ENCODE measurements at regions of chr1 and their contacts with region 1.

Region 1: GRCh38 chr1:182084487-182085316 is 23.2 kb upstream of the ZNF648 start:
- DNase-seq: peak; percentile 93
- H3K4me3 ChIP-seq: no peak overlapping the region
- H3K27ac ChIP-seq: peak overlapping the region in 3 of 4 donors; percentile 56 to 61 (median 60)
- H3K4me1 ChIP-seq: peaks cover 0 to 10% (median 7%) of the 10 kb centered on the region in 4 donors
- H3K27me3 ChIP-seq: no peaks in the 10 kb centered on the region
- CTCF ChIP-seq: peak; percentile 82 to 94 (median 91)
- EP300 ChIP-seq: no peak
- POLR2A ChIP-seq: no peak

Region 2: DNA sequence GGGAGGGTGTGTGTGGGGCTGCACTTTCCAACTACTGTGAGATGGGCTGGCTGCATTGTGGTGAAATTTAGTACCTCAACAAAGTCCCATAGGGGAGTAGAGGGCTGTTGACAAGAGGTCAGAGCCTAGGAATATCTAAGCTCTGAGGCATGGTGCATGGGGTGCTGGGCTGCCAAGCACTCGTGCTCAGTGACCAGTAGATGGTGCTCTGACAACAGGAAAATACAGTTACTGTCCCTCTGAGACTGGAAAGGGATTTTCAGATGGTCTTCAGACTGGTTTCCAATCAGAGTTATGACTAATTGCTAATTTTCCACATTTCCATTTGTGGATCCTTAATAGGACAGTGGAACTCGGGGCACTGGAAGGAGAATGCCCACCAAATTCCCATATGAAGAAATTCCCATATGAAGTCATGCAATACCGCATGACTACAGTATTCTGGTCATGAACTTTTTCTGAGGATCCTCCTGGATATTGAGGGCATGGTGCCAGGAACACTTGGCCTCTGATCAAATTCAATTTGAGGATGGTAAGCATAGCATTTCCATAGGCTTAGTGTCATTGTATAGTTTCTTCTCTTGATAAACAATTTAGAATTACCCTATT is 605.5 kb before region 1 on chr1:
- in situ Hi-C with region 1: loop called in 1 of 4 experiments (anchors 10 kb)
- intact Hi-C with region 1: no loop called
- DNase-seq: peak; percentile 26
- H3K4me3 ChIP-seq: no peak overlapping the region
- H3K27ac ChIP-seq: no peak overlapping the region
- H3K4me1 ChIP-seq: peaks cover 0 to 14% (median 7%) of the 10 kb centered on the region in 4 donors
- H3K27me3 ChIP-seq: peaks cover 39% of the 10 kb centered on the region
- CTCF ChIP-seq: peak; percentile 65 to 76 (median 72)
- EP300 ChIP-seq: no peak
- POLR2A ChIP-seq: no peak

Region 3: DNA sequence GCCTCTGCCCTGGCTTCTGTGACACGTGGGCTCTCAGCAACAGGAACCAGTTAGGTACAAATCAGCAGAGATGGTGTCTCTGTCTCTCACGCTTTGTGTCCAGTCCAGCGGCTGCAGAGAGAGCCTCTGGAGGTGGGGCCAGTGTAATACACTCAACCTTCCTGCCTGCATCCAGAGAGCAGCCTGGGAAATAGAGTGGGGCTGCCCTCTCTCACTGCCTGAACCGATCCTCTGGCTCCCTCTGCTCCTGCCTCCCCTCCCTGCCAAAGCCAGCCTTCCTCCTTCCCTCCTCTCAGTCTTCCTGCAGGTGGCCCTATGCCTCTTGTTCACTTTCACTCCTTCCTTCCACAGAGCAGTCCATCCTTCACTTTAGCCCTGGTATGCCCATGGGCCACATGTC is 23.1 kb before region 1 on chr1 and contains the start of gene ZNF648:
- in situ Hi-C with region 1: no loop called
- intact Hi-C with region 1: no loop called
- DNase-seq: no peak
- H3K4me3 ChIP-seq: no peak within 1 kb of the TSS
- H3K27ac ChIP-seq: no peak within 1 kb of the TSS
- H3K4me1 ChIP-seq: no peaks in the 10 kb centered on the region
- H3K27me3 ChIP-seq: peaks cover 21% of the 10 kb centered on the region
- CTCF ChIP-seq: no peak
- EP300 ChIP-seq: no peak
- POLR2A ChIP-seq: no peak
- total RNA-seq, gene ZNF648: 0.14 to 0.48 TPM in 2 of 4 donors, not detected in the others

Region 4: DNA sequence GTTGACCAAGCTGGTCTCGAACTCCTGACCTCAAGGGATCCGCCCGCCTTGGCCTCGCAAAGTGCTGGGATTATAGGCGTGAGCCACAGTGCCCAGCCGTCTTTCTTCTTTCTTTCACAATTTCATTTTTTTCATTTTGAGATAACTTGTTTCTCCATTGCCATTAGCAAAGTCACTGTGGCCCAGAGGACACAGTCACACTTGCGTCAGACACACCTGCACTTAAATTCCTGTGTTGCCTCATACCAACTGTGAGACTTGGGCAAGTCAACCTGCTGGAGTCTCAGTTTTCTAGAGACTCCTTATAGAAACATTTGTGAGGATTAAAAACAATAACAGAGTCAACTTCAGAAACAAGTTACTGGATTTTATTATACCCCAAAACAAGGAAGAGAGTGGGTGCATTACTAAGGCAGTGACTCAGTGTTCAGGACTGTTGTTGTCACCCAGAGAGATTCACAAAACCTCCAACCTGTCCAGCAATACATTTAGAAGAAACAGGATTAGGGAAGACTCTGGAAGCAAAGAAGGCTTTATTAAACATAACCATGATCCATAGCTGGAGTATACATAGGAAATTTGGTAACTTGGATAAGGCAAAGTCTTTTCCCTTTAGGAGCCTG is 313.2 kb after region 1 on chr1:
- in situ Hi-C with region 1: loop called in 3 of 4 experiments (anchors 5 to 10 kb)
- intact Hi-C with region 1: loop called (anchors 2 kb)
- DNase-seq: no peak
- H3K4me3 ChIP-seq: no peak overlapping the region
- H3K27ac ChIP-seq: peak overlapping the region in 1 of 4 donors; percentile 7
- H3K4me1 ChIP-seq: peaks cover 4 to 27% (median 10%) of the 10 kb centered on the region in 4 donors
- H3K27me3 ChIP-seq: no peaks in the 10 kb centered on the region
- CTCF ChIP-seq: no peak
- EP300 ChIP-seq: no peak
- POLR2A ChIP-seq: no peak

Region 5: DNA sequence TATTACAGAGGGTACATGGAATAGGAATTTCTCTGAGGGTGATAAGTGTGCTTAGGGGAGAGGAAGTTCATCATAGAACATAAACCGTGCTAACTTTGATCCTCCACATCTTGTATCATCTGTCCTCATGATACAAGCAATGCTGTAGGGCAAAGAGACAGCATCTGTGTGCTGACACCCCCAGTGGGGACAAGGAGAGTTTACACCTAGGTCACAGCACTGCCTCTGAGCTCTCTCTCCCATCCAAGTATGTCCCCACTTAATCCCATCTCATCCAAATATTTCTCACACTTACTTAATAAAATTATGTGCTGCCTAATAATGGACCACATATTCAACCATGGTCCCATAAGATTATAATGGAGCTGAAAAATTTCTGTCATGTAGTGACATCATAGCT is 320.1 kb after region 1 on chr1:
- in situ Hi-C with region 1: loop called in 3 of 4 experiments (anchors 5 to 10 kb)
- intact Hi-C with region 1: no loop called
- DNase-seq: no peak
- H3K4me3 ChIP-seq: no peak overlapping the region
- H3K27ac ChIP-seq: no peak overlapping the region
- H3K4me1 ChIP-seq: peaks cover 0 to 18% (median 5%) of the 10 kb centered on the region in 4 donors
- H3K27me3 ChIP-seq: no peaks in the 10 kb centered on the region
- CTCF ChIP-seq: no peak
- EP300 ChIP-seq: no peak
- POLR2A ChIP-seq: no peak

Region 6: GRCh38 chr1:182588500-182589452 is 504.1 kb after region 1 on chr1 and contains the start of gene RNASEL:
- in situ Hi-C with region 1: loop called in 3 of 4 experiments (anchors 25 kb)
- intact Hi-C with region 1: no loop called
- DNase-seq: peak; percentile 86
- H3K4me3 ChIP-seq: peak within 1 kb of the TSS; percentile 71 to 87 (median 81)
- H3K27ac ChIP-seq: peak within 1 kb of the TSS; percentile 97 to 99 (median 98)
- H3K4me1 ChIP-seq: peaks cover 8 to 34% (median 19%) of the 10 kb centered on the region in 4 donors
- H3K27me3 ChIP-seq: no peaks in the 10 kb centered on the region
- CTCF ChIP-seq: no peak
- EP300 ChIP-seq: no peak
- POLR2A ChIP-seq: peak; percentile 78
- total RNA-seq, gene RNASEL: 9.0 to 19.9 (median 15.4) TPM

Region 7: GRCh38 chr1:182789138-182790076 is 704.7 kb after region 1 on chr1 and contains the start of gene NPL:
- in situ Hi-C with region 1: loop called in 3 of 4 experiments (anchors 25 kb)
- intact Hi-C with region 1: no loop called
- DNase-seq: peak; percentile 88
- H3K4me3 ChIP-seq: peak within 1 kb of the TSS; percentile 53 to 76 (median 64)
- H3K27ac ChIP-seq: peak within 1 kb of the TSS; percentile 63 to 83 (median 76)
- H3K4me1 ChIP-seq: peaks cover 4 to 17% (median 14%) of the 10 kb centered on the region in 4 donors
- H3K27me3 ChIP-seq: no peaks in the 10 kb centered on the region
- CTCF ChIP-seq: no peak
- EP300 ChIP-seq: no peak
- POLR2A ChIP-seq: peak; percentile 80
- total RNA-seq, gene NPL: 9.6 to 94.5 (median 11.4) TPM in 3 of 4 donors, not detected in the other

Region 8: DNA sequence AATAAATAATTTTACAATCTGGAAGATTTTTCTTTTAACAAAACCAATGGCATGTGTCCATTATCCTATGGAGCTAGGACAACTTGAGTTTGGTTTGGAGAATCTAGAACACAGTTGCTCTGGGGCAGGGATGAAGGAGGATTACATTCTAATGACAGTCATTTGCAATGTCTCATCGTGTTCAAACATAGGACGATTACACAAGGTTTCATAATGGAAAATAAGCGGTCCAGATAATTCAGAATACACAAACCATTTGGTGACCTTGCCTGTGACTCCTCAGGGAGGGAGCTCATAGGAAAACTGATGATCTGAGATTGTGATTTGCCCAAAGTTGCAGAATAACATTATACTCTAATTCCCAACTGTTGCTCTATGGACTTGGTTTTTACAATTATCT is 1692.6 kb after region 1 on chr1:
- in situ Hi-C with region 1: no loop called
- intact Hi-C with region 1: loop called (anchors 10 kb)
- DNase-seq: no peak
- H3K4me3 ChIP-seq: no peak overlapping the region
- H3K27ac ChIP-seq: no peak overlapping the region
- H3K4me1 ChIP-seq: no peaks in the 10 kb centered on the region
- H3K27me3 ChIP-seq: no peaks in the 10 kb centered on the region
- CTCF ChIP-seq: no peak
- EP300 ChIP-seq: no peak
- POLR2A ChIP-seq: no peak